ENCODE measurements at regions of chrX and their contacts with region 1.

Region 1: GRCh38 chrX:150772150-150772970 is 79.2 kb downstream of the MTMR1 start:
- DNase-seq: peak; percentile 81
- H3K4me3 Mint-ChIP-seq: no peak overlapping the region
- H3K27ac Mint-ChIP-seq: peak overlapping the region; percentile 20
- H3K4me1 Mint-ChIP-seq: peaks cover 7% of the 10 kb centered on the region
- H3K27me3 Mint-ChIP-seq: no peaks in the 10 kb centered on the region
- CTCF ChIP-seq: peak; percentile 87

Region 2: GRCh38 chrX:150649096-150649870 is 123.1 kb before region 1 on chrX:
- CTCF ChIA-PET with region 1: no interaction called
- POLR2A ChIA-PET with region 1: no interaction called
- intact Hi-C with region 1: no loop called
- DNase-seq: no peak
- H3K4me3 Mint-ChIP-seq: no peak overlapping the region
- H3K27ac Mint-ChIP-seq: no peak overlapping the region
- H3K4me1 Mint-ChIP-seq: no peaks in the 10 kb centered on the region
- H3K27me3 Mint-ChIP-seq: no peaks in the 10 kb centered on the region
- CTCF ChIP-seq: no peak

Region 3: GRCh38 chrX:150982788-150983520 is 210.6 kb after region 1 on chrX and contains the start of gene HMGB3:
- CTCF ChIA-PET with region 1: interaction called, 3 read pairs
- POLR2A ChIA-PET with region 1: interaction called, 5 read pairs
- intact Hi-C with region 1: loop called (anchors 2 kb)
- DNase-seq: peak; percentile 93
- H3K4me3 Mint-ChIP-seq: peak within 1 kb of the TSS; percentile 54
- H3K27ac Mint-ChIP-seq: no peak within 1 kb of the TSS
- H3K4me1 Mint-ChIP-seq: peaks cover 12% of the 10 kb centered on the region
- H3K27me3 Mint-ChIP-seq: no peaks in the 10 kb centered on the region
- CTCF ChIP-seq: no peak
- total RNA-seq, gene HMGB3: 65.8 and 75.3 TPM in 2 replicates

Region 4: DNA sequence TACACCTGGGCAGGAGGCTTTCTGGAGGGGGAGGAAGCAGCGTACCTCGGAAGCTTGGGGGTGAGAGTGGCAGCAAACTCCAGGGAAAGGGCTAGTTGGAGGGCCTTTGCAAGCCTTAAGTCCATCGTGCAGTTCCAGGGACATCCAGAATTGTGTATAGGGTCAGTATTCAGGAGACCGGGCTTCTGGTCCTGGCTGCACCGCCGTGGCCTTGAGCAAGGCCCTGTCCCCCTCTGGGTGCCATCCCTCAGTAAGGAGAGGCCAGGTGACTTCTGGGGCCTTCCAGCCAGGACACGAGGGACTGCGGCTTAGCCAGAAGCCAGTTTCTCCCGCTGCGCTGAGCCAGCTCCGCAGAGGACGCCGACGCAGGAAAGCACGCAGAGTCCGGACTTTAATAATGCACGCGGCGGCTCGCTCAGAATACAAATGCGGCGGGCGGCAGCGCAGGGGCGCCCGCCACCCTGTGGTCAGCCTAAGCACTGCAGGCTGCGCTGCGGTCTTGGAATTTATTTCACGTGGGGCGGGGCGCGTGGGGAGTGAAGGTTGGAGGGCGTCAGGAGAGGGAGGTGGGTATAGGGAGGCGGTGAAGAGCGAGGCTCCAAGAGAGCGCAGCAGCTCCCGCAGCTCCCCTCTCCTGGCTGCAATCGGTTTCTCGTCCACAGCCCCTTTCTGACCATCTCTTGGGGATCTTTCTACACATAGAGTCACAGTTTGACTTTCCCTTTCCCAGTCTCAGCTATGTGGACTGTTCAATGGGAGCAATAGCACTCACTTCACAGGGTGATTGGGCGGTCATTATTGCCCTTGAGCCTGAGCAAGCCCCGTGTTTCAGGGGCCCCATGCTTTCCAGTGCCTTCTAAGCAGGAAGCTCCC is 310.0 kb after region 1 on chrX:
- CTCF ChIA-PET with region 1: interaction called, 89 read pairs
- POLR2A ChIA-PET with region 1: interaction called, 7 read pairs
- intact Hi-C with region 1: no loop called
- DNase-seq: peak; percentile 56
- H3K4me3 Mint-ChIP-seq: peak overlapping the region; percentile 43
- H3K27ac Mint-ChIP-seq: no peak overlapping the region
- H3K4me1 Mint-ChIP-seq: no peaks in the 10 kb centered on the region
- H3K27me3 Mint-ChIP-seq: no peaks in the 10 kb centered on the region
- CTCF ChIP-seq: peak; percentile 86